Activated CD4-positive, alpha-beta T cell treated with anti-CD3 and anti-CD28 coated beads, Interleukin-2, amount 10 ng/mL, durations not matched to agents 24 days and 14 days (primary cell): ENCODE measurements at regions of chr12 and their contacts with region 1.

Region 1: GRCh38 chr12:49763006-49763591 is 21.7 kb downstream of the TMBIM6 start:
- DNase-seq: peak; percentile 93
- H3K4me3 Mint-ChIP-seq: peak overlapping the region; percentile 75
- H3K27ac Mint-ChIP-seq: peak overlapping the region; percentile 90
- H3K4me1 Mint-ChIP-seq: peaks cover 56% of the 10 kb centered on the region
- H3K27me3 Mint-ChIP-seq: no peaks in the 10 kb centered on the region

Region 2: GRCh38 chr12:49740930-49741881 is 21.9 kb before region 1 on chr12 and contains the start of gene TMBIM6:
- intact Hi-C with region 1: loop called (anchors 1 kb)
- DNase-seq: peak; percentile 100
- H3K4me3 Mint-ChIP-seq: peak within 1 kb of the TSS; percentile 90
- H3K27ac Mint-ChIP-seq: peak within 1 kb of the TSS; percentile 95
- H3K4me1 Mint-ChIP-seq: peaks cover 31% of the 10 kb centered on the region
- H3K27me3 Mint-ChIP-seq: peaks cover 5% of the 10 kb centered on the region
- total RNA-seq, gene TMBIM6: 370 and 372 TPM in 2 replicates

Region 3: DNA sequence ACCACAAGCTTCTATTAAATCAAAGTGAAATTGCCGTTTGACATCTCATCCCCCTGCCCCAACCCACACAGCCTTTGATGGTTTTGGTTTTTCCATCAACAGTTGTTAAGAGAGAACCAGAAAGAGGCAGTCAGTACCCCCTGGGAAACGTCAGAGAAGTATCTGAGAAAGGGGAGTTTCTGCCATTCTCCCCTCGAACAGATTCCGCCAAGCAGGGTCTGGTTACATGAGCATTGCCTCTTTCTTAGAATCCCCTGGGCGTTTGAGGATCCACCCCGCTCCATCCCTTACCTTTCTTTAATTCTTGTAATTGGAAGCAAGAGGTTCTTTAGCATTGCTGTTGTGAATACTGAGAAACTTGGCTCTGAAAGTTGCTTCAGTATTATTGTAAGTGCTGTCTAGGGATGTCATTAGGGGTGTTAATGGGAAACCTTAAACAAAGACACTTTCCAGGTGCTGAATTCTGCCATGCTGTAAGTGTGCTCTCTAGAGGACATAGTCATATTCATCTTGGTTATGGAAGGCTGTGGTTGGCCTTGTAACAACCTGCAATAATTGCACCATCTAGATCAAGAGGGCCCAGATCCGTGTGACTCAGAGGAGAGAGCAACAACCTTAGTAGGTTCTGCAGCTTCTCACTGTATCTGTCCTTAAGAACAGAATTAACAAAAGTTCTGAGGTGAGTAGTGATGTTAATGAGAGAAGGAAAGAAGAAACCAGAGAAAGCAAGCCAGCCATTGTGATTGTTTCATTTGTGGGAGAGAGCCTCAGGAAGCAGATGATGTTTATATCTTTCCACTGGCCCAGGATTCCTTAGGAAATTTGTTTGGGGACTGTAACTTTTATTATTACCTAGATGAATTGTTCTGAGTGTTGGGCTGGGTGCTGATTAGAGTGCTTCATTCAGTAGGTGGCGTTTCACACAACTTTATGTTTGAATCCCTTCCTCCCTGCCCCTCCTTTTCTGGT is 12.8 kb before region 1 on chr12:
- intact Hi-C with region 1: loop called (anchors 1 kb)
- DNase-seq: peak; percentile 77
- H3K4me3 Mint-ChIP-seq: peak overlapping the region; percentile 68
- H3K27ac Mint-ChIP-seq: peak overlapping the region; percentile 79
- H3K4me1 Mint-ChIP-seq: peaks cover 60% of the 10 kb centered on the region
- H3K27me3 Mint-ChIP-seq: no peaks in the 10 kb centered on the region

Region 4: GRCh38 chr12:49776413-49776812 is 13.3 kb after region 1 on chr12:
- intact Hi-C with region 1: loop called (anchors 2 kb)
- DNase-seq: peak; percentile 87
- H3K4me3 Mint-ChIP-seq: no peak overlapping the region
- H3K27ac Mint-ChIP-seq: no peak overlapping the region
- H3K4me1 Mint-ChIP-seq: peaks cover 11% of the 10 kb centered on the region
- H3K27me3 Mint-ChIP-seq: peaks cover 20% of the 10 kb centered on the region